ENCODE measurements at regions of chr10 and their contacts with region 1.

Region 1: GRCh38 chr10:64468219-64468618 is 947.0 kb downstream of the REEP3 start:
- DNase-seq: no peak

Region 2: DNA sequence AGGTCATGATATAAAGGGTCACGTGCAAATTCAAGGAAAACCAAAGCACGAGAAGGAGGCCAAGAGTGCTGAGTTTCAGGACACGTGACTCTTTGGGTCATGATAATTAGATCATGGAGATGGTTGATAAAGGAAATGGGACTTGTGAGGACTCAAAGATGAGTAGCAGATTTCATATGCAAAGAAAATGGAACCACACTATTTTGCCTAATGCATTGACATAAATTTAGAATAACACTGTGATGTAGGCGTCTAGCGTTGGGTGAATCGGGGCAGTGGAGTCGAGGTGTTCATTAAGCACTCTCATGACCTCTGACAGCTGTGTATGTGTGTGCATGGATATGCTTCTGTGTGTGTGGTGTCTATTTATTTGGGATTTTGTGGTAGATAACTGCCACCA is 1432.1 kb after region 1 on chr10:
- intact Hi-C with region 1: loop called in 1 of 2 experiments (anchors 5 kb)
- DNase-seq: no peak